OCI-LY7 (cell line): ENCODE measurements at regions of chr1 and their contacts with region 1.

Region 1: GRCh38 chr1:179066471-179066870 is 15.4 kb upstream of the TOR3A start:
- DNase-seq: no peak
- H3K4me3 ChIP-seq: no peak overlapping the region
- H3K27ac ChIP-seq: no peak overlapping the region
- H3K4me1 ChIP-seq: peaks cover 18% of the 10 kb centered on the region
- CTCF ChIP-seq: no peak

Region 2: DNA sequence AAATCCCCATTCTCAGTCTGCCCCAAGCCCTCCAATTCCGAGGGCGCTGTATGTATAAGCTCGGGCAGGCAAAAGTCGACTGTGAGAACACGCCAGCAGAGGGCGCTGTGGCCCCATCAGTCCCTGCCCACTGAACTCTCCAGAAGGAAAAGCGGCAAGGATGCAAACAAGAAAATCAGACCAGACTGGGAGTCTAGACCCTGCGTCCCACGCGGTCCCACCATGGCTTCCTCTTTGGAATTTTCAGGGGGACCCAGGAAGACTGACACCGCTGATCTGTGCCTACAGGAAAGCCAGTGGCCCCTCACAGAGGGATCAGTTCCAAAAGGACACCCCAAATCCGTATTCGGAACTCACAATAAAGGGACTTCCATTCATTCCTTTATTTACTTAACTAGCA is 534.1 kb before region 1 on chr1:
- CTCF ChIA-PET with region 1: no interaction called
- POLR2A ChIA-PET with region 1: no interaction called
- intact Hi-C with region 1: loop called (anchors 2 kb)
- DNase-seq: peak; percentile 79
- H3K4me3 ChIP-seq: no peak overlapping the region
- H3K27ac ChIP-seq: no peak overlapping the region
- H3K4me1 ChIP-seq: no peaks in the 10 kb centered on the region
- CTCF ChIP-seq: peak; percentile 99

Region 3: GRCh38 chr1:178774263-178774662 is 292.2 kb before region 1 on chr1:
- CTCF ChIA-PET with region 1: no interaction called
- POLR2A ChIA-PET with region 1: no interaction called
- intact Hi-C with region 1: loop called (anchors 5 kb)
- DNase-seq: peak; percentile 48
- H3K4me3 ChIP-seq: no peak overlapping the region
- H3K27ac ChIP-seq: no peak overlapping the region
- H3K4me1 ChIP-seq: no peaks in the 10 kb centered on the region
- CTCF ChIP-seq: peak; percentile 83

Region 4: GRCh38 chr1:179034720-179035119 is 31.8 kb before region 1 on chr1:
- CTCF ChIA-PET with region 1: no interaction called
- POLR2A ChIA-PET with region 1: interaction called, 3 read pairs
- intact Hi-C with region 1: loop called (anchors 2 kb)
- DNase-seq: peak; percentile 69
- H3K4me3 ChIP-seq: peak overlapping the region; percentile 57
- H3K27ac ChIP-seq: peak overlapping the region; percentile 82
- H3K4me1 ChIP-seq: peaks cover 98% of the 10 kb centered on the region
- CTCF ChIP-seq: no peak